ENCODE measurements at regions of chr17 and their contacts with region 1.

Region 1: GRCh38 chr17:416293-417206 is 63.9 kb upstream of the RPH3AL start:
- DNase-seq: peak in 1 of 3 donors; percentile 52
- ATAC-seq: peak; percentile 63
- H3K4me3 ChIP-seq: no peak overlapping the region
- H3K4me1 ChIP-seq: peaks cover 10% of the 10 kb centered on the region
- CTCF ChIP-seq: no peak

Region 2: GRCh38 chr17:236638-237405 is 179.7 kb before region 1 on chr17:
- intact Hi-C with region 1: no loop called
- DNase-seq: peak in 1 of 3 donors; percentile 34
- ATAC-seq: no peak
- H3K4me3 ChIP-seq: no peak overlapping the region
- H3K4me1 ChIP-seq: no peaks in the 10 kb centered on the region
- CTCF ChIP-seq: no peak

Region 3: GRCh38 chr17:333626-334396 is 82.7 kb before region 1 on chr17:
- intact Hi-C with region 1: no loop called
- DNase-seq: peak; percentile 58 to 65 (median 61)
- ATAC-seq: peak; percentile 36
- H3K4me3 ChIP-seq: no peak overlapping the region
- H3K4me1 ChIP-seq: peaks cover 9% of the 10 kb centered on the region
- CTCF ChIP-seq: no peak

Region 4: GRCh38 chr17:520447-521182 is 104.1 kb after region 1 on chr17:
- intact Hi-C with region 1: no loop called
- DNase-seq: no peak
- ATAC-seq: no peak
- H3K4me3 ChIP-seq: no peak overlapping the region
- H3K4me1 ChIP-seq: no peaks in the 10 kb centered on the region
- CTCF ChIP-seq: no peak

Region 5: GRCh38 chr17:688100-688989 is 271.8 kb after region 1 on chr17:
- intact Hi-C with region 1: loop called in 1 of 2 experiments (anchors 5 kb)
- DNase-seq: peak; percentile 55 to 63 (median 58)
- ATAC-seq: peak; percentile 91
- H3K4me3 ChIP-seq: no peak overlapping the region
- H3K4me1 ChIP-seq: no peaks in the 10 kb centered on the region
- CTCF ChIP-seq: no peak

Region 6: DNA sequence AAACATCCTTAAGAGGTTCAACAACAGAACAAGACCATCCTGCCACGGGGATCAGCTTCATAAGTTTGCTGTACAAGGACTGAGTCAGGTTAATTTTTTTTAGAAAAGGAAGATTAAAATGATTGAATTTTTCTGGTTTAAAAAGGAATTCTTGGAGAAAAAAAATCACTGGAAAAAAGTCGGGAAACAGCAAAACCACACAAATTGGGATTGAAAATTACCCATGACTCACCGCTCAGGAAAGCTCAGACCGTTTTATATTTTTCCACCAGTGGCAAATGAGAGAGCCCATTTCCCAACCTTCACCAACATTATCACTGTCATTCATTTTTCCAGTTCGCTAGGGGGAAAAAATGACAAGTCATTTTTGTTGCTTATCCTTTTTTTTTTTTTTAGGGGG is 412.2 kb after region 1 on chr17:
- intact Hi-C with region 1: no loop called
- DNase-seq: no peak
- ATAC-seq: no peak
- H3K4me3 ChIP-seq: no peak overlapping the region
- H3K4me1 ChIP-seq: no peaks in the 10 kb centered on the region
- CTCF ChIP-seq: no peak

Measured in mucosa of descending colon (tissue), 3 donors.